Endothelial cell of umbilical vein (primary cell): ENCODE measurements at regions of chr17 and their contacts with region 1.

Region 1: GRCh38 chr17:76737082-76737675 is at the start of gene SRSF2:
- DNase-seq: peak; percentile 99
- H3K4me3 ChIP-seq: peak within 1 kb of the TSS; percentile 82 to 96 (median 90)
- H3K27ac ChIP-seq: peak within 1 kb of the TSS; percentile 92
- H3K4me1 ChIP-seq: peaks cover 38% of the 10 kb centered on the region
- H3K27me3 ChIP-seq: no peaks in the 10 kb centered on the region
- CTCF ChIP-seq: no peak
- POLR2A ChIP-seq: peak; percentile 100
- total RNA-seq, gene SRSF2: 303 and 307 TPM in 2 replicates

Region 2: DNA sequence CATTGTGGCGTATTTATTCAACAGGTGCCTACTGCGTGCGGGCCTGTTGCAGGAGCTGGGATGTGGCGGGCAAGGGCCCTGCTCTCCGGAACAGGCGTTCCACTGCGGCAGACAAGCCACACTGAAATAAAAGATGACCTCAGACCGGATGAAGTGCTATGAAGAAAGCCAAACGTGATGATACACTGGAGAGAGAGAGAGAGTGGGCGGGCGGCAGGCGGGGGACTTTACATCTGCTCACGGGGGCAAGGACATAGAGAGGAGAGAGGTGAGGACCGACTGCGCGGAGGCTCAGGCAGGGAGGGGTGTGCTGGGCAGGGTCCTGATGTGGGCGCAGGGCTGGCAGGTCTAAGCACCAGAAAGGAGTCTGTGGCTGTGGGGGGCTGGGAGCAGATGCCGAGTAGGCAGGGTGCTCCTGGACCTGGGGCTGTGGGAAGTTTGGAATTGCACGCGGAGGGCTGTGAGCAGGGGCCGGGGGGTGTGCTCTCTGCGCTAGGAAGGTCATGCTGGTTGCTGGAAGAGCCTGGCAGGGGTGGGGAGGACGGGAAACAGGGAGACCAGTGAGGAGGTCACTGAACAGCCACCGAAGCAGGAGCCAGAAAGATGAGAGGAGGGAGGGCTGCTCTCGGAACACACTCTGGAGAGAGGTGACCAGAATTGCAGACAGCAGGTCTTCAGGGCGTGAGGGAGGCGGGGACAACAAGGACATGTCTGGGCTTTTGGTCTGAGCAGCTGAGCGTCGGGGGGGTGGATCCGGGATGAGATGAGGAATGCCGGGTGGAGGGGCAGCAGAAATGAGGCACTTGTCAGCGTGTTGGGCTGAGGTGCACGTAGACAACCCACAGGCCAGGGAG is 36.3 kb before region 1 on chr17:
- CTCF ChIA-PET with region 1: no interaction called
- POLR2A ChIA-PET with region 1: no interaction called
- dilution Hi-C with region 1: no loop called
- intact Hi-C with region 1: no loop called
- DNase-seq: peak; percentile 37
- H3K4me3 ChIP-seq: no peak overlapping the region
- H3K27ac ChIP-seq: peak overlapping the region; percentile 68
- H3K4me1 ChIP-seq: peaks cover 35% of the 10 kb centered on the region
- H3K27me3 ChIP-seq: no peaks in the 10 kb centered on the region
- CTCF ChIP-seq: no peak
- POLR2A ChIP-seq: no peak

Region 3: GRCh38 chr17:76726231-76726775 is 10.9 kb before region 1 on chr17 and contains the start of gene JMJD6:
- CTCF ChIA-PET with region 1: interaction called, 22 read pairs
- POLR2A ChIA-PET with region 1: interaction called, 21 read pairs
- dilution Hi-C with region 1: no loop called
- intact Hi-C with region 1: loop called (anchors 1 kb)
- DNase-seq: peak; percentile 96
- H3K4me3 ChIP-seq: peak within 1 kb of the TSS; percentile 66 to 99 (median 90)
- H3K27ac ChIP-seq: peak within 1 kb of the TSS; percentile 85
- H3K4me1 ChIP-seq: peaks cover 18% of the 10 kb centered on the region
- H3K27me3 ChIP-seq: no peaks in the 10 kb centered on the region
- CTCF ChIP-seq: no peak
- POLR2A ChIP-seq: peak; percentile 88
- total RNA-seq, gene JMJD6: 36.6 and 41.6 TPM in 2 replicates

Region 4: GRCh38 chr17:76747716-76748363 is 10.7 kb after region 1 on chr17:
- CTCF ChIA-PET with region 1: no interaction called
- POLR2A ChIA-PET with region 1: no interaction called
- dilution Hi-C with region 1: no loop called
- intact Hi-C with region 1: no loop called
- DNase-seq: no peak
- H3K4me3 ChIP-seq: no peak overlapping the region
- H3K27ac ChIP-seq: no peak overlapping the region
- H3K4me1 ChIP-seq: no peaks in the 10 kb centered on the region
- H3K27me3 ChIP-seq: no peaks in the 10 kb centered on the region
- CTCF ChIP-seq: no peak
- POLR2A ChIP-seq: no peak

Region 5: GRCh38 chr17:76772842-76773525 is 35.8 kb after region 1 on chr17:
- CTCF ChIA-PET with region 1: interaction called, 7 read pairs
- POLR2A ChIA-PET with region 1: interaction called, 5 read pairs
- dilution Hi-C with region 1: no loop called
- intact Hi-C with region 1: loop called (anchors 2 kb)
- DNase-seq: peak; percentile 75
- H3K4me3 ChIP-seq: peak overlapping the region in 2 of 3 experiments; percentile 18 to 43
- H3K27ac ChIP-seq: peak overlapping the region; percentile 87
- H3K4me1 ChIP-seq: peaks cover 13% of the 10 kb centered on the region
- H3K27me3 ChIP-seq: no peaks in the 10 kb centered on the region
- CTCF ChIP-seq: no peak
- POLR2A ChIP-seq: no peak

Region 6: GRCh38 chr17:76791053-76791980 is 54.1 kb after region 1 on chr17:
- CTCF ChIA-PET with region 1: no interaction called
- POLR2A ChIA-PET with region 1: no interaction called
- dilution Hi-C with region 1: no loop called
- intact Hi-C with region 1: loop called (anchors 5 kb)
- DNase-seq: peak; percentile 53
- H3K4me3 ChIP-seq: no peak overlapping the region
- H3K27ac ChIP-seq: no peak overlapping the region
- H3K4me1 ChIP-seq: peaks cover 7% of the 10 kb centered on the region
- H3K27me3 ChIP-seq: no peaks in the 10 kb centered on the region
- CTCF ChIP-seq: no peak
- POLR2A ChIP-seq: no peak

Region 7: DNA sequence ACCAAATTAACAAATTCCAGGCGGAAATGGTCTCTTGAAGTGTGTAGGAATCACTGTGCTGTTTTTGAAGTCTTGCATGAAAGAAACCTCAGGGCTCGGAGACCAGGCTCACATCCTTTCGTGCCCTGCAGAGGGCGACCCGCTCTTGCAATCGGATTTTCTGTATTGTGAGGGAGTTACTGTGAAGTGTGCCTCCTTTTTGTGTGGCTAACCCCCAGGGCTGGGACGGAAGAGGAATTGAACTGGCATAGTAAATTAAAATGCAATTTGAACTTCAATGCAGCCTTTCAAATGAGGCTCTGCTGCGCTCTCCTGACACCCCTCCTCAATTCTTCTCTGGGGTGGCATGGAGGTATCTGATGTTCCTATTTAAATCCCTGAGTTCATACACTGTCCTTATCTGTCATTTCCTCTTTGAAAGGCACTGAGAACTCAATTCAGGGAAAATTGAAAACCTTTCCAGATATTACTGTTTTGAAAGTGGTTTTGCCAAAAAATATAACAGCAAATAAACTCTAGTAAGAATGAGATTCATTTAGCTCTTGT is 79.5 kb after region 1 on chr17:
- CTCF ChIA-PET with region 1: interaction called, 11 read pairs
- POLR2A ChIA-PET with region 1: no interaction called
- dilution Hi-C with region 1: no loop called
- intact Hi-C with region 1: no loop called
- DNase-seq: peak; percentile 41
- H3K4me3 ChIP-seq: no peak overlapping the region
- H3K27ac ChIP-seq: no peak overlapping the region
- H3K4me1 ChIP-seq: no peaks in the 10 kb centered on the region
- H3K27me3 ChIP-seq: peaks cover 0 to 3% of the 10 kb centered on the region in 2 experiments
- CTCF ChIP-seq: peak; percentile 57 to 73
- POLR2A ChIP-seq: no peak

Region 8: DNA sequence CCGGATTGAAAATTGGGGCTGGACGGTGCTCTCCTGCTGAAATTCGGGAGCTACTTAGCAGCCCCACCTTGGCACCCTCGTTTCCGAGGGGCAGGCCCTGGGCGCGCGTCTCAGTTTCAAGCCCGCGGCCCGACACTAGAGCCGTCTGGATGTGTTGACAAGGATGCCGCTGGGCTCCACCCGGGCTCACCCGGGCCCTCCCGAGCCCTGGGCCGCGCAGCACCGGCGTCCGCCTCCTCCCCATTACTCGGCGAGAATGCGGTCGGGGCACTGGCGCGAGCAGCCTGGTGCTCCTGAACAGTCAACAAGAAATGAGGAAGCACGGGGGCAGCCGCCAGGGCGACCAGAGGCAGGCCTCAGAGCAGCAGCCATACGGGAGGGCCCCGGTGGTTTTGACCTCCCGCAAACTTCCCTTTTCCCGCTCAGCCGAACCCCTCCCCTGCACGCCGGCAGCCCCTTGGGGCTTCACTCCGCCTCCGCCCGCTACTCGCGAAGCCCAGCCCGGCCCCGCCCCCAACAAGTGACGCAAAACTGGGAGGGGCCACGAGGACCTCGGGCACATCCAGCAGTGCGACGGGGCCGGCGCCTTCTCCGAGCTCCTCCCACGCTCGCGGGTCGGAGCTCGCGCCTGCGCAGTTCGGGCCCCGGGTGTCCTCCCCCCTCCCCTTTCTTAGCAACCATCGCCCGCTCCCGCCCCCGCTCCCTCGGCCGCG is 403.1 kb after region 1 on chr17:
- CTCF ChIA-PET with region 1: no interaction called
- POLR2A ChIA-PET with region 1: no interaction called
- dilution Hi-C with region 1: no loop called
- intact Hi-C with region 1: loop called (anchors 1 kb)
- DNase-seq: peak; percentile 99
- H3K4me3 ChIP-seq: peak overlapping the region in 2 of 3 experiments; percentile 12 to 19
- H3K27ac ChIP-seq: peak overlapping the region; percentile 94
- H3K4me1 ChIP-seq: peaks cover 46% of the 10 kb centered on the region
- H3K27me3 ChIP-seq: no peaks in the 10 kb centered on the region
- CTCF ChIP-seq: peak in 1 of 2 donors; percentile 8
- POLR2A ChIP-seq: peak; percentile 87